ENCODE measurements at regions of chr6 and their contacts with region 1.

Region 1: DNA sequence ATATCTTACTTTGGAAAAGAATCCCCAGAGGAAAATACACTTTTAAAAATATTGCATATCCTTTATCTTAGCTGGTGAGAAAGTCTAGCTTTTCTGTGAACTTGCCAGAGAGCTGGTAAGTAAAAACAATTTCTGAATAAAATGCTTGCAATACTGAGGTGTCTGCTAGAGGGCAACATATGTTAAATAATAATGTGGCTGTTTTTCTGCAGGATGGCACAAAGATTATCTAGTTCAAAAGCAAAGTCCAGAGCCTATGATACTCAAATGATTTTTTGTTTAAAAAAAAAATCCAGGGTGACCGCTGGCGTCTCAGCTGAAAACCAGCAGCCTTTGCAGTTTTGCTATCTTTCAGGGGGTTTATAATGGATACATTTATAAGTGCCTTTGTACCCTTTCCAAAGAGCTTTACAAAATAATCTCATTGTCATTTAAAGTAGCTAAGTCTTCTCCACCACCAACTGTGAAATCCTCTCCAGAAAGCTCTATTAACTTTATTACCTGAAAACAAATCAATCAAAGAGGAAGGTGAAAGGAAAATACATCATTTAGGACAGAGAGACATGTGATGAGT is 194.9 kb downstream of the PHACTR1 start:
- DNase-seq: peak; percentile 3
- H3K4me3 ChIP-seq: no peak overlapping the region
- H3K27ac ChIP-seq: no peak overlapping the region
- H3K4me1 ChIP-seq: no peaks in the 10 kb centered on the region
- H3K27me3 ChIP-seq: peaks cover 2% of the 10 kb centered on the region
- CTCF ChIP-seq: peak; percentile 30 to 46

Region 2: GRCh38 chr6:12844290-12845223 is 66.9 kb before region 1 on chr6:
- CTCF ChIA-PET with region 1: no interaction called
- dilution Hi-C with region 1: no loop called
- in situ Hi-C with region 1: no loop called
- intact Hi-C with region 1: no loop called
- DNase-seq: no peak
- H3K4me3 ChIP-seq: no peak overlapping the region
- H3K27ac ChIP-seq: no peak overlapping the region
- H3K4me1 ChIP-seq: no peaks in the 10 kb centered on the region
- H3K27me3 ChIP-seq: peaks cover 2% of the 10 kb centered on the region
- CTCF ChIP-seq: peak; percentile 42 to 59

Region 3: GRCh38 chr6:12865671-12866181 is 45.7 kb before region 1 on chr6:
- CTCF ChIA-PET with region 1: no interaction called
- dilution Hi-C with region 1: no loop called
- in situ Hi-C with region 1: no loop called
- intact Hi-C with region 1: no loop called
- DNase-seq: no peak
- H3K4me3 ChIP-seq: no peak overlapping the region
- H3K27ac ChIP-seq: no peak overlapping the region
- H3K4me1 ChIP-seq: no peaks in the 10 kb centered on the region
- H3K27me3 ChIP-seq: peaks cover under 1% of the 10 kb centered on the region
- CTCF ChIP-seq: no peak

Region 4: GRCh38 chr6:13302751-13303667 is 391.5 kb after region 1 on chr6:
- CTCF ChIA-PET with region 1: no interaction called
- dilution Hi-C with region 1: no loop called
- in situ Hi-C with region 1: loop called (anchors 25 kb)
- intact Hi-C with region 1: no loop called
- DNase-seq: peak; percentile 80
- H3K4me3 ChIP-seq: no peak overlapping the region
- H3K27ac ChIP-seq: no peak overlapping the region
- H3K4me1 ChIP-seq: peaks cover 11% of the 10 kb centered on the region
- H3K27me3 ChIP-seq: no peaks in the 10 kb centered on the region
- CTCF ChIP-seq: no peak